B cell (primary cell): ENCODE measurements at regions of chr6 and their contacts with region 1.

Region 1: DNA sequence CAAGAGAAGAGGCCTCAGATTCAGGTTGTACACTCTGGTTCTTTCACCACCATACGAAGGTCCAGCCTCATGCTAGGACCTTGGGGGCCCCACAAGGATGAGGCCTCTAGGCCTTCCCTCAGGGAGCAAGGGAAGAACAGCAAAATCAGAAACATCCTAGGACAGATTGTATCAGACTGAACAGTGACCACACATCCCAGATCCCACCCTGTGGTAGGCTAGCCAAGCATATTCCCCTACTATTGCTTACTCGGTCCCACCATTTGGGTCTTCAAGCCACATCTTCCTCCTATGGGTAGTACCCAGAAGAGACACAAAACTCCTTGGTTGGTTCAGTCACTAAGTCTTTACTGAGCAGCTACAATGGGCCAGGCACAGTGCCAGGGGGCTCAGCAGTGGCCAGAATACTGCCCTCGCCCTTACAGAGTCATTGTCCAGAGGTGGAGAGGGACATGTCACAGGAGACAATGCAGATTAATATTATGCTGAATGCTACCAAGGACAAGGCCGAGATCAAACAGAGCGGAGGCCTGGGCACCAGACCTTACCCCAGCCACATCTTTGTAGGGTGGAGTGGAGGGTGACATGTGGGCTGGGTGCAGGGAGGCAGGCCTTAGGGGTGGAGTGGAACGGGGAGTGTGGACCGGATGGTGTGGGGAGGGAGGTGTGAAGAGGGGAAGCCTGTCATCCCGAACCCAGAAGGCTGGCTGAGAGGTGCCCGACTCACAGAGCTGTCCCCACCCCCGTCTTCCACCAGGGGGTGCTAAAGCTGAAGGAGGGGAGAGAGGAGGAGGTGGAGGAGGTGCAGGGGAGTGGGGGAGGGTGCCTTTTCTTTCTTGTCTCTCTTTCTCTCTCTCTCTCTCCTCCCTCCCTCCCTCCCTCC is 6.8 kb upstream of the MAPK13 start:
- DNase-seq: peak; percentile 88
- ATAC-seq: peak; percentile 74
- H3K4me3 ChIP-seq: no peak overlapping the region
- H3K4me3 Mint-ChIP-seq: peak overlapping the region; percentile 12
- H3K27ac ChIP-seq: peak overlapping the region; percentile 62 to 95
- H3K27ac Mint-ChIP-seq: peak overlapping the region; percentile 88
- H3K4me1 ChIP-seq: peaks cover 57 to 70% of the 10 kb centered on the region in 2 donors
- H3K4me1 Mint-ChIP-seq: peaks cover 69% of the 10 kb centered on the region
- H3K27me3 ChIP-seq: no peaks in the 10 kb centered on the region
- H3K27me3 Mint-ChIP-seq: no peaks in the 10 kb centered on the region
- CTCF ChIP-seq: peak; percentile 64

Region 2: DNA sequence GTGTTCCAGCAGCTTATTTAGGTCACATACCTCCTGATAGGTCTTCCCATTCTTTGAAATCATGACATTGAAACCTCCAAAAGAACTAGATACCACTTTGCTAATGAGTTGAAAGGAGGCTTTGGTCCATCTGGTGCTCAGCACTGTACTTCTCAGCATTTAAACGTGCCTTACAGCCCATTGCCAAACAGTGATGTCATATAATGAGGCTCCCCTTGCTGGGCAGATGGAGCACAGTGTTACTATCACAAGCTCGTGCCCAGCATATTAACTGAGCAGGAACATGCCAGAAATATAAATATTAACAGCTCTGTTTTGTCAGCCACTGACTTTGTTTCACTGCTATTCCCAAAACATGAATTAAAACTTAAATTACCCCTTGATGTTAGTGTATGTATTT is 18.7 kb before region 1 on chr6:
- CTCF ChIA-PET with region 1: interaction called, 61 read pairs
- POLR2A ChIA-PET with region 1: interaction called, 8 read pairs
- intact Hi-C with region 1: loop called (anchors 1 kb)
- DNase-seq: no peak
- ATAC-seq: no peak
- H3K4me3 ChIP-seq: no peak overlapping the region
- H3K4me3 Mint-ChIP-seq: no peak overlapping the region
- H3K27ac ChIP-seq: no peak overlapping the region
- H3K27ac Mint-ChIP-seq: no peak overlapping the region
- H3K4me1 ChIP-seq: peaks cover 33 to 36% of the 10 kb centered on the region in 2 donors
- H3K4me1 Mint-ChIP-seq: peaks cover 38% of the 10 kb centered on the region
- H3K27me3 ChIP-seq: no peaks in the 10 kb centered on the region
- H3K27me3 Mint-ChIP-seq: no peaks in the 10 kb centered on the region
- CTCF ChIP-seq: no peak

Region 3: DNA sequence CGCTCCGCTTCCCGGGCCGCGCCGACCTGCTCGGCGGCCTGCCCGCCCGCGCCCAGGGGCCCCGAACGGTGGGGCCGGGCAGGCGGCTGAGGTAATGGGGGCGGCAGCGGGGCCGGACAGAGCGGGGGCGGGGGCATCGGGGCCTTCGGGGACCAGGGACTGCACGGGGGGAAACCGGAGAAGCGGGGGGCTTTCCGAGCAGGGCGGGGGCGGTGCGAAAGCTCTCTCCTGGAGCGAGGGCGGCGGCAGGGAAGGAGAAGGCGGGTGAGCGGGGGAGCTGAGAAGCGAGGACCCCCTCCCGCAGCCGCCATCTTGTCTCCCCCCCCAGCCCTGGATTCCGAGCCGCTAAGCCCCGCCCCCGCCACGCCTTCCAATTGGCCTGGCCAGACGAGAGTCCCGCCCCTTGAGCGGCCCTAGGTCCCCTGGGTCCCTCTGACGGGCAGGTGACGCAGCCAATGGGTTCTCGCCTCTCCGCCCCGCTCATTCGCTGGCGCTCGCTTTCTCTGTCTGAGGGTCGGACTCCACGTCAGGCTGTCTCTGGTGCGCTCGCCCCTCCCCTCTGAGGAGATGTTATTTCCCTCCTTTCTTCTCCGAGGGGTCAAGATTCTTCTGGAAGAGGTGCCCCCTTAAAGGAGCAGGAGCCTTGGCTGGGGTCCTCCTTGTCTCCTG is 73.5 kb after region 1 on chr6:
- CTCF ChIA-PET with region 1: interaction called, 14 read pairs
- POLR2A ChIA-PET with region 1: interaction called, 5 read pairs
- intact Hi-C with region 1: loop called (anchors 1 kb)
- DNase-seq: peak; percentile 98
- ATAC-seq: peak; percentile 90
- H3K4me3 ChIP-seq: peak overlapping the region; percentile 17 to 84 (median 62)
- H3K4me3 Mint-ChIP-seq: peak overlapping the region; percentile 94
- H3K27ac ChIP-seq: peak overlapping the region; percentile 78 to 79
- H3K27ac Mint-ChIP-seq: peak overlapping the region; percentile 96
- H3K4me1 ChIP-seq: peaks cover 21 to 22% of the 10 kb centered on the region in 2 donors
- H3K4me1 Mint-ChIP-seq: peaks cover 36% of the 10 kb centered on the region
- H3K27me3 ChIP-seq: no peaks in the 10 kb centered on the region
- H3K27me3 Mint-ChIP-seq: no peaks in the 10 kb centered on the region
- CTCF ChIP-seq: no peak

Region 4: GRCh38 chr6:36280467-36280866 is 157.0 kb after region 1 on chr6:
- CTCF ChIA-PET with region 1: no interaction called
- POLR2A ChIA-PET with region 1: no interaction called
- intact Hi-C with region 1: no loop called
- DNase-seq: peak; percentile 40
- ATAC-seq: no peak
- H3K4me3 ChIP-seq: no peak overlapping the region
- H3K4me3 Mint-ChIP-seq: no peak overlapping the region
- H3K27ac ChIP-seq: no peak overlapping the region
- H3K27ac Mint-ChIP-seq: no peak overlapping the region
- H3K4me1 ChIP-seq: peaks cover 9 to 11% of the 10 kb centered on the region in 2 donors
- H3K4me1 Mint-ChIP-seq: peaks cover 14% of the 10 kb centered on the region
- H3K27me3 ChIP-seq: peaks cover 0 to 29% (median 9%) of the 10 kb centered on the region in 4 experiments
- H3K27me3 Mint-ChIP-seq: peaks cover 38% of the 10 kb centered on the region
- CTCF ChIP-seq: no peak

Region 5: GRCh38 chr6:36459501-36459900 is 336.0 kb after region 1 on chr6:
- CTCF ChIA-PET with region 1: no interaction called
- POLR2A ChIA-PET with region 1: interaction called, 12 read pairs
- intact Hi-C with region 1: no loop called
- DNase-seq: no peak
- ATAC-seq: no peak
- H3K4me3 ChIP-seq: no peak overlapping the region
- H3K4me3 Mint-ChIP-seq: no peak overlapping the region
- H3K27ac ChIP-seq: no peak overlapping the region
- H3K27ac Mint-ChIP-seq: no peak overlapping the region
- H3K4me1 ChIP-seq: peaks cover 0 to 8% of the 10 kb centered on the region in 2 donors
- H3K4me1 Mint-ChIP-seq: peaks cover 37% of the 10 kb centered on the region
- H3K27me3 ChIP-seq: no peaks in the 10 kb centered on the region
- H3K27me3 Mint-ChIP-seq: no peaks in the 10 kb centered on the region
- CTCF ChIP-seq: no peak